GM18951 (cell line): ENCODE measurements at regions of chr5 and their contacts with region 1.

Region 1: DNA sequence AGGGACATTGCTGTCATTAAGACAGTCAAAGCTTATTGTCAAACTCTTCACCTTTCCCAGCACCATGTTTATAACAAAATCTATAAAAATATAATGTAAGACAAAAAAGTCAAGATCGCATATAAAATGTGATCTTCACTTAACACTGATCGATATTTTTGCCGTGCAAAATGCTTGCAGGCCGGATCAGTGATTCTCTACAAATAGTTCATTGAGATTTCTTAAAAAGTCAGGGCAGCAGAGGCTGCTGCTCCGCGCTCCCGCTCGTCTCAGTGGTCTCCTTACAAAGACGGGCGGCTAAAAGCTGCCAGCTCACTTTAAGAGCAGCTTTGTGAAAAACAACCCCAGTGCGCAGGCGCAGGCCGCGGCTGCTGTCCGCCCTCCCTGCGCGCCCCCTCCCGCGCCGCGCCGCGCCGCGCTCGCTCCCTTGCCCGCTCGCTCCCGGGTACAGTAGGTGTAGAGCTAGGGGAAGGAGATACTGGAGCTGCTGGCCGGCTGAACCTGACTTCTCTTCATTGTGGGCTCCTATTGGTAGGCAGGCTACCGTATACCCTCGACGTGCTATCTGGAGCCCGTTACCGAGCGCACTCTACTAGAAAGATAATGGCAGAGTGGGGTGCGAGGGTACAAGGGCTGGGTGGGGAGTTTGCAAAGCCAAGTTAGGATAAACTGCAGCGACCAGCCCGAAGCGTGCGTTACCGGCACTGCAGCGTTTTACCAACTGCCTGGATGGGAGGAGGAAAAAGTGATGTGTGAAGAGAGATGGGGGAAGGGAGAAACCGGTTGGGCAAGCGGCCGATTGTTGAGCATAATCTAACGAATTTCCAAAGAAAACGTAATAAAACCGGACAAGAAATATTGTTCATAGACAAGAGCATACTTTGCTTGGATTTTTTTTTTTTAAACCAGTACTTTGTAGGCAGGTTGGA is at the start of gene ARRDC3:
- POLR2A ChIP-seq: peak; percentile 99

Region 2: DNA sequence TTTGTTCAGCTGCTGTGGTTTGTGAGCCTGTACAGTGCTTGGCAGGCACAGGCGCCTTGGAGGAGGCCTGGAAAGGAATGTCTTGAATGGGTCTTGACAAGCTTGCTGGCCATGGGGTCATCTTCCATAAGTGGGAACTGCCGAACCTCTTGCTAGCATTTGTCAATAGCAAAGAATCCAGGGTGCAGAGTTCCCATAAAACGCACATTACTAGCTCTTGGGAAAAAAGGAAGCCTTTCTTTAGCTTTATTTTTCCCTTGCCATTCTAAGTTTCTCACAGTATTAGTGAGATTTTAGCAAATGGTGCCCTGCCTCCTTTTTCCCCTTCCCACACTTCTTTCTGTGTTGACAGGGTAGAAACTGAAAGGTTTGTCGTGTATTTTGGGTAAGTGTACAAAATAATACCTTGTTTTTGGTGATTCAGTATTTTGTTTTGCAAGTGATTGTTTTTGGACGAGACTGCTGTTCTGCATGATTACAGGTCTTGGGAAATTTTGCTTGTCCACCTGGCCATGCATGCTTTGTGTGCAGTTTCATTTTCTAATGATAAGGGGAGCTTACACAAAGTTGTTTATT is 742.7 kb before region 1 on chr5:
- in situ Hi-C with region 1: no loop called
- POLR2A ChIP-seq: no peak

Region 3: DNA sequence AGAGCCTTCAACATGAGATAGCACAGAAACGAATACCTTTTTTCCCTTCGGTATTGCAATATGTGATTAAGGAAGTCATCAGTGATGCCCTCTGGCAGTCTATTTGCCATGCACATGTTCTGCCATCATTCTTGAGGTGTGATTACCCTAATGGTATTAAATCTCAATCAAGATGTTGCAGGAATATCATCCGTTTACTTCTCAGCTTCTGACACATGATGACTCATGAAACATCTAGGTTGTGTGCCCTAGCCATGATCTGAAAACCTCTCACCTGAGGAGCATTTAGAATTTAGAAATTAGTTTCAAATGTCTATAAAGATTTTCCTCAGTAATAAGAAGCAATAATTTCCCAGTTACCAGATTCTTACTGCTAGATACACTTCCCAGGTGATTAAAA is 615.6 kb before region 1 on chr5:
- in situ Hi-C with region 1: no loop called
- POLR2A ChIP-seq: no peak

Region 4: GRCh38 chr5:91101600-91102379 is 281.5 kb before region 1 on chr5:
- in situ Hi-C with region 1: loop called (anchors 5 kb)
- POLR2A ChIP-seq: no peak

Region 5: DNA sequence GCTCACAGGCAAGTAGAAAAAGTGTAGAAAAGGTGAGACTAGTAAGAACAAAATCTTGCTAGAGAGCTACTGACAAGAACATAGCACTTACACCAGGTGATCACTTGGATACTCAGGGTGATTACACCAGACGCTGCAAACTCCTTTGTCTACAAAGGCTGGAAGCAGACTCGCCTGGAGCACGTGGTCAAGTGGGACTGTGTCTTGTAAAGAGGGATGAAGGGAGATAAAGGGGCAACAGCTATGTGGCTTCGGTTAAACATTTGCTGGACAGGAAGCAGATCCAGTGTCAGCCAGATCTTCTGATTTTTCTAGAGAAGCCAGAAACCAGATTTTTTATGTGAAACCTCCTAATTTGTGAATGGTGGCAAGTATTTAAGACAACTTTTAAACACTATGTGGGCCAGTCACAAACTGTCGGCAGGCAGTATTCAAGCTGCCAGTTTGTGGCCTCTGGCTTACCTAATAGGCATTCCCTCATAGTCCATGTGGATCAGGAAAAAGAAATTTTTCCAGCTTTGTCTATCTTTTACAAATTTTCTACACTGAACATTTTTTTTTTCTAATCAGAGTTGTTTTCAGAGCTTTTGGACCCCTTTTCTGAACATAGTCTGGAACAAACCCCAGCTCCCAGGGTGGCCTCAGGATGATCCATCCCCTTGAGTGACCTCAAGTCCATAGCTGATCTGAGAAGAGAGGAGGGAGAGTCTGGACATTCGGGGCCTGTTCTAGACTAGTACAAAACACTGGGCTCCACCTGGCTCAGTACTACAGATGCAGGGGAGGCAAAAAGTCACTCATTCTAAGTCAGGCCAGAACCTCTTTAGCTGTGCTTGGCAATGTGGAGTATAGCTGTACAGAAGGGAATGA is 263.1 kb before region 1 on chr5:
- in situ Hi-C with region 1: no loop called
- POLR2A ChIP-seq: no peak

Region 6: DNA sequence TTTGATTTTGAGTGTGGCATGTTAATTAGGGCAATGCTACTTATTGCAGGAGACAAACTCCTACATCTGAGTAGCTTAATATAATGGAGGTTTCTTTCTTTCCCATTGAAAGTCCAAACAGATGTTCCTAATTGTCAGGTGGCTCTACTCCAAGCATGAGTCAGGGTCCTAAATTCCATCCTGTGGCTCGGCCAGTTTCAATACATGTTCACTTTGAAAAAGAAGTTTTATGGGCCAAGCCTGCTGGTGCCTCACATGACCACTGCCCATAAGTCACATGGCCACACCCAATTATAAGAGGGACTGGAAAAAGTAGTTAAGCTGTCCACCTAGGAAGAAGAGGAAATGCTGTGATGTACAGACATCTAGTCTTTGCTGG is 170.6 kb before region 1 on chr5:
- in situ Hi-C with region 1: no loop called
- POLR2A ChIP-seq: no peak

Region 7: GRCh38 chr5:91225848-91226686 is 157.2 kb before region 1 on chr5:
- in situ Hi-C with region 1: loop called (anchors 10 kb)
- POLR2A ChIP-seq: no peak